ENCODE measurements at regions of chr19 and their contacts with region 1.

Region 1: GRCh38 chr19:56350416-56351045 is 35.9 kb upstream of the ZSCAN5A start:
- DNase-seq: peak; percentile 29
- H3K4me3 ChIP-seq: no peak overlapping the region
- H3K27ac ChIP-seq: no peak overlapping the region
- H3K4me1 ChIP-seq: no peaks in the 10 kb centered on the region
- H3K27me3 ChIP-seq: no peaks in the 10 kb centered on the region
- CTCF ChIP-seq: peak; percentile 69 to 96 (median 83)
- EP300 ChIP-seq: no peak
- POLR2A ChIP-seq: no peak

Region 2: GRCh38 chr19:56066152-56067023 is 284.1 kb before region 1 on chr19:
- in situ Hi-C with region 1: loop called in 3 of 4 experiments (anchors 10 to 25 kb)
- intact Hi-C with region 1: loop called (anchors 10 kb)
- DNase-seq: peak; percentile 71
- H3K4me3 ChIP-seq: no peak overlapping the region
- H3K27ac ChIP-seq: no peak overlapping the region
- H3K4me1 ChIP-seq: peaks cover 0 to 8% (median 3%) of the 10 kb centered on the region in 4 donors
- H3K27me3 ChIP-seq: peaks cover 4% of the 10 kb centered on the region
- CTCF ChIP-seq: peak; percentile 69 to 92 (median 82)
- EP300 ChIP-seq: no peak
- POLR2A ChIP-seq: no peak

Region 3: GRCh38 chr19:56080669-56081401 is 269.7 kb before region 1 on chr19:
- in situ Hi-C with region 1: loop called in 1 of 4 experiments (anchors 10 kb)
- intact Hi-C with region 1: loop called (anchors 10 kb)
- DNase-seq: peak; percentile 85
- H3K4me3 ChIP-seq: peak overlapping the region in 3 of 4 donors; percentile 8 to 53 (median 33)
- H3K27ac ChIP-seq: no peak overlapping the region
- H3K4me1 ChIP-seq: peaks cover 0 to 12% (median 8%) of the 10 kb centered on the region in 4 donors
- H3K27me3 ChIP-seq: peaks cover 8% of the 10 kb centered on the region
- CTCF ChIP-seq: peak; percentile 27 to 63 (median 53)
- EP300 ChIP-seq: no peak
- POLR2A ChIP-seq: no peak

Region 4: DNA sequence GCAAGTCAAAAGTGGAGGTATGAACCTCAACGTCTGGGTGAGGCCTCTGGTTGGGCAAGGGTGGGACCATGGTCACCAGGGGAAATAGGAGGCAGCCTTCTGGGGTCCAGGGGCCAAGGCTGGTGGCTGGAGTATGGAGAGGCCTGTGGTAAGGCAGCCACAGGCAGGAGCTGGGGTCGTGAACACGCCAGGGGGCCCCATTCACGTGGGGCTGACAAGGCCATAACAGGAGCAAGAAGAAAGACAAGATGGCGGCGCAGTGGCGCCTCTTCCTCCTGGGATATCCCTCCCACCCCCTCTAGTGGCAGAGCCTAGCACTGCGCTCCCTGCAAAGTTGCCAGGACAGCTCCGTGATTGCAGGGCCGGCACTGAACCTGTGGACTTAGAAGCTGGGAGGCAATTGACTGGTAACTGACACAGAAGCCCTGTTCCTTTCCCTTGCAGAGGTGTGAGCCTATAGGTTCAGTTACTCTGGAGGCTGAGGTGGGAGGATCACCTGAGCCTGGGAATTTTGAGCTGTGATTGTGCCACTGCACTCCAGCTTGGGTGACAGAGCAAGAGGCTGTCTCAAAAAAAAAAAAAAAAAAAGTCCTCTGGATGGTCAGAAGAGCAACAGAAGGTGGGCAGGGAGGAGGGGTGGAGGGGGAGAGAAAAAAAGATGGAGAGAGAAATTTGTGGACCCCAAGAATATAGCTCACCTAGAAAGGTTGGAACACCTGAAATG is 97.7 kb before region 1 on chr19:
- in situ Hi-C with region 1: loop called in 1 of 4 experiments (anchors 10 kb)
- intact Hi-C with region 1: loop called (anchors 10 kb)
- DNase-seq: peak; percentile 83
- H3K4me3 ChIP-seq: no peak overlapping the region
- H3K27ac ChIP-seq: no peak overlapping the region
- H3K4me1 ChIP-seq: no peaks in the 10 kb centered on the region
- H3K27me3 ChIP-seq: no peaks in the 10 kb centered on the region
- CTCF ChIP-seq: peak; percentile 70 to 84 (median 81)
- EP300 ChIP-seq: no peak
- POLR2A ChIP-seq: no peak

Region 5: GRCh38 chr19:56309517-56310185 is 40.9 kb before region 1 on chr19:
- in situ Hi-C with region 1: no loop called
- intact Hi-C with region 1: no loop called
- DNase-seq: peak; percentile 51
- H3K4me3 ChIP-seq: no peak overlapping the region
- H3K27ac ChIP-seq: no peak overlapping the region
- H3K4me1 ChIP-seq: peaks cover 0 to 15% (median 4%) of the 10 kb centered on the region in 4 donors
- H3K27me3 ChIP-seq: no peaks in the 10 kb centered on the region
- CTCF ChIP-seq: peak; percentile 48 to 62 (median 54)
- EP300 ChIP-seq: no peak
- POLR2A ChIP-seq: no peak

Measured in transverse colon (tissue), 4 donors.